GM10248 (cell line): ENCODE measurements at regions of chr5 and their contacts with region 1.

Region 1: DNA sequence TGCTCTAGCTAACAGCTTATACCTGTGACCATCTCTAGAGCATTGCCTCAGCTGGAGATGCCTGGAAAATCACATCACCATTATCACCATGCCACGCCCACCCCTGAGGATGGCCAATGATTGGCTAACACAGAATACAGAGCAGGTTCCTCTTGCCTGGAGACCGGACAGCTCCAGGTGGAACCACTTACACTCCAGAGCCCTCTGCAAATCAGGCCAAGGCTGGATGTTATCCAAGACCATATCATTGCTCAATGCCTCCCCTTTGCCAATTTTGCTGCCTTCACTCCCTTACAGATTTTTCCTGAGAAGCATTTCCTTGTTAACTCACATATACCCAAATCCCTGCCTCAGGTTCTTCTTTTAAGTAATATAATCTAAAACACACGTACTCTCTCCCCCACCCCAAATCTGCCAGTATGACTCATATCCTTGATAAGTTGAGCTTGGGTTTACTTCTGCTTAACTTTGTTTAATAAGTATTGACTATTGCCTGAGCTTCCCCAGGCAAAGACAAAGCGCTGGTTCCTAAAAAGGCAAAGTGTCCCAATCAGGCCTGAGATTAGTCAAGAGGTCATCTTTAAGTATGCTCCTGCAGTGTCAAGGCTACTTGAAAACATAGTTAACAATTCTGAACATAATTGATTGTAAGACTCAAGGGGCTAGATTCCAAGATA is 309.6 kb downstream of the EPB41L4A start:
- DNase-seq: no peak
- CTCF ChIP-seq: no peak

Region 2: GRCh38 chr5:111830333-111830732 is 279.1 kb before region 1 on chr5:
- CTCF ChIA-PET with region 1: no interaction called
- POLR2A ChIA-PET with region 1: no interaction called
- DNase-seq: no peak
- CTCF ChIP-seq: no peak

Region 3: DNA sequence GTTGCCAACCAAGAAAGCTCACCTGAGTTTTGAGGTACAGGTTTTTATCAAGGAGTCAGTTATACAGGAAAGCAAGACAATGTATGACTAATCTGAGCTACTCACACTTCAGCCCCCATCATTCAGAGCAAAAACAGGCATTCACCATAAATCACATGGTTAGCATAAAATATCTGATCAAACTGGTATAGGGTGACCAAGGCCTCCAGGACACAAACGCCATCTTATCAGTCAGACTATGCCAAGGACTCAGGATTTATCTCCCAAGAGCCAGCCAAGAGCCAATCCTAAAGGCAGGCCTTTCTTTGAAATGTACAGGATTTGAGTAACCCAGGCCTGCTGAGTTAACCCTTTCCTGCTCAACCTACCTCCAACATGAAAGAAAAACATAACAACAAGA is 39.4 kb before region 1 on chr5:
- CTCF ChIA-PET with region 1: no interaction called
- POLR2A ChIA-PET with region 1: no interaction called
- DNase-seq: no peak
- CTCF ChIP-seq: no peak

Region 4: DNA sequence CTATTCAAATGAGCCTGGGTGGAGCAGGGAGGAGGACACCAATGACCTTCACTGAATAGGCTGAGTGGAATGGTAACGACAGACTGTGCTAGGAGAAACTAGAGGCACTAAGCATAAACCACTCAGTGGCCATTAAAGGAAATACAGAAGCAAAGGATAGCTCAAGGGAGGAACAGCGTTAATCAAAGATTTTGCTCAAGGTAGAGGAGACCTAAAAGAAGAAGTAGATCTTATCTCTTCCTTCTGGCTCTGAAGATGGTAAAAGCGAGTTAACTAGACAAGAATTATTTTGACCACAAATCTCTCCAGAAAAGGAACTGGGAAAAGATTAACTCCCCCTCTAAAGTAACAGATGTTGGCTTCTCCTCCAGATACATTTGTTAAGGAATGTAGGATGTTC is 10.0 kb after region 1 on chr5:
- CTCF ChIA-PET with region 1: interaction called, 14 read pairs
- POLR2A ChIA-PET with region 1: no interaction called
- DNase-seq: no peak
- CTCF ChIP-seq: no peak

Region 5: DNA sequence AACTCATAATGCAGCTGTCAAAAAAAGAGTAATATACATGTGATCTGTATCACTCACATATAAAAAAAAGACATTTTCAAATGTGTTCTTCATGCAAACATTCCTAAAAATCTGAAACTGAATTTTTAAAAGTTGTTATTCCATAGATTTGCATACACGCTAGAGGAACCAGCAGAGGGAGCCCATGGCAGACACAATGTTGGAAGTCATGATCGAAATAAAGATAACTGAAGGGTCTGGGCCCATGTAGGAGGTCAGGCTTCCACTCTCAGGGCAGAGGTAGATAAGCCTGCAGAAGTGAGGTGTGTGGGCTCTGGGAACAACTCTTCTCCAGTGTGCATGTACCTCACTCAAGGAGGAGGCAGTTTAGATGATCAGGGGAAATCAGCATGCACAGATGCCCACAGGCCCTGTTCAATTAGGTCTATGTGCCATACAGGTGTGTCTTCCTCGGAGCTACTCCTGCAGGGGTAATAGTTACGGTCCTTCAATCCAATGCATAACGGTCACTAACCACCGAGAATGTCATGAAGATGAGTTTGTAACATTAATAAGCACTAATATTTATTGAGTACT is 101.0 kb after region 1 on chr5:
- CTCF ChIA-PET with region 1: no interaction called
- POLR2A ChIA-PET with region 1: no interaction called
- DNase-seq: peak; percentile 13
- CTCF ChIP-seq: peak; percentile 55